MCF 10A (cell line): ENCODE measurements at regions of chr14 and their contacts with region 1.

Region 1: GRCh38 chr14:22099942-22100763 is 426.5 kb upstream of the OR4E1 start:
- DNase-seq: peak; percentile 63
- H3K4me3 Mint-ChIP-seq: no peak overlapping the region
- H3K27ac Mint-ChIP-seq: no peak overlapping the region
- H3K4me1 Mint-ChIP-seq: no peaks in the 10 kb centered on the region
- H3K27me3 Mint-ChIP-seq: peaks cover 75% of the 10 kb centered on the region
- CTCF ChIP-seq: peak; percentile 45

Region 2: GRCh38 chr14:21987937-21988336 is 112.2 kb before region 1 on chr14:
- CTCF ChIA-PET with region 1: interaction called, 11 read pairs
- POLR2A ChIA-PET with region 1: no interaction called
- intact Hi-C with region 1: no loop called
- DNase-seq: peak; percentile 52
- H3K4me3 Mint-ChIP-seq: no peak overlapping the region
- H3K27ac Mint-ChIP-seq: no peak overlapping the region
- H3K4me1 Mint-ChIP-seq: no peaks in the 10 kb centered on the region
- H3K27me3 Mint-ChIP-seq: peaks cover 76% of the 10 kb centered on the region
- CTCF ChIP-seq: peak; percentile 28

Region 3: GRCh38 chr14:22047115-22047514 is 53.0 kb before region 1 on chr14:
- CTCF ChIA-PET with region 1: interaction called, 10 read pairs
- POLR2A ChIA-PET with region 1: no interaction called
- intact Hi-C with region 1: no loop called
- DNase-seq: peak; percentile 41
- H3K4me3 Mint-ChIP-seq: no peak overlapping the region
- H3K27ac Mint-ChIP-seq: no peak overlapping the region
- H3K4me1 Mint-ChIP-seq: no peaks in the 10 kb centered on the region
- H3K27me3 Mint-ChIP-seq: peaks cover 94% of the 10 kb centered on the region
- CTCF ChIP-seq: peak; percentile 33

Region 4: DNA sequence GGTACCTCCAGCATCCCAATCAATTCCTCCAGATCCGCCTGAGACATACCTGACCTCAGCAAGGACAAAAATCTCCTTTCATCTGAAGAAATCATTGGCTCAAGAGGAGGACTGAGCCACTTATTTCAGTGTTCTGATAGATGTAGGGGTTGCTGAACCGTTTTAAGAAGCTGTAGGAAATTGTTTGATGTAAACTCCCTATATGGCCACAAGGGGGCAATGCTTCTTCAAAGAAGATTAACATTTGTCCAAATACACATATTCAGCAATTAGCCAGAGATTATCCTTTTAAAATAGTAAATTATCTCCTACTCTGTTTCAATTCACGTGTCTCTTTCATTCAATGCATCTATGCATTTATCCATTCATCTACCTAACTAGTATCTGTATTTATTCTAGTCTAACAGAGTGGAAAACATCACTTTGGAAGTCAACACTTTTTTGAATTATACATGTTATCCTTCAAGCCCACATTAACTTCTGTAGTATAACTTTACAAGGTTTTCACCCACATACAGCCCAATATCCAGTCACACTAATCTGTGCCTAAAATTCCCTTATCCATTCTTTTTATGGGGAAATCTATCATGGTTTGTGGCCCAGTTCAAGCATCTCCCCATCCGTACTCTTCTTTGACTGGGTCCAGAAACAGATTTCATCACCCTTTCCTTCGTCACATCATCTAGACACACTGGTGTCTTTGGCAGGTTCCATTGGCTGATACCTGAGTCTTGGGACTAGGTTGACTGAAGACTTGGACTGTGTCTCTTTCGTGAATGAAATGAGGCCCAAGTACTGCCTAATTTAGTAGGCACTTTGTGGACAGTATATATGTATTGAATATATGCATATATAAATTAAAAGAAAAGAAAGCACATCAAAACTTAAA is 15.5 kb before region 1 on chr14:
- CTCF ChIA-PET with region 1: interaction called, 11 read pairs
- POLR2A ChIA-PET with region 1: no interaction called
- intact Hi-C with region 1: loop called (anchors 1 kb)
- DNase-seq: peak; percentile 62
- H3K4me3 Mint-ChIP-seq: no peak overlapping the region
- H3K27ac Mint-ChIP-seq: no peak overlapping the region
- H3K4me1 Mint-ChIP-seq: peaks cover 5% of the 10 kb centered on the region
- H3K27me3 Mint-ChIP-seq: peaks cover 38% of the 10 kb centered on the region
- CTCF ChIP-seq: peak; percentile 66

Region 5: GRCh38 chr14:22112004-22112403 is 11.9 kb after region 1 on chr14:
- CTCF ChIA-PET with region 1: interaction called, 27 read pairs
- POLR2A ChIA-PET with region 1: no interaction called
- intact Hi-C with region 1: no loop called
- DNase-seq: peak; percentile 46
- H3K4me3 Mint-ChIP-seq: no peak overlapping the region
- H3K27ac Mint-ChIP-seq: no peak overlapping the region
- H3K4me1 Mint-ChIP-seq: no peaks in the 10 kb centered on the region
- H3K27me3 Mint-ChIP-seq: peaks cover 59% of the 10 kb centered on the region
- CTCF ChIP-seq: peak; percentile 56

Region 6: DNA sequence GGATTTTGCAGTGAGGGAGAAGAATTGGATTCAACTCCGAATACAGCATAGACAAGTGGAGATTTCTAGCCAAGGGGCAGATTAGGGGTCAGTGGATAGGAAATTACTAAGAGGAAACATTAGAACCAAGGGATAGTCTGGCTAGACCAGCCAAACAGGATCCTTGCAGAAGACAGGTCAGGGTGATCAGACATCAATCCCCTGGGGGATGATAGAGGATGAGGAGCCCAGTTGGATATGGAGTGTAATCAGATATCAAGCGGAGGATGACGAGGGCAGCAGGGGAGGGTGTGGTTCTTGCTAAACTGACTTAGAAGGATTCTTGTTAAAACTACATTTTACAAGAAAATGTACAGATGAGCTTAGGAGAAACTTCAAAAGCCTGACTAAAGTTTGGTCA is 64.5 kb after region 1 on chr14:
- CTCF ChIA-PET with region 1: no interaction called
- POLR2A ChIA-PET with region 1: no interaction called
- intact Hi-C with region 1: no loop called
- DNase-seq: no peak
- H3K4me3 Mint-ChIP-seq: no peak overlapping the region
- H3K27ac Mint-ChIP-seq: no peak overlapping the region
- H3K4me1 Mint-ChIP-seq: no peaks in the 10 kb centered on the region
- H3K27me3 Mint-ChIP-seq: peaks cover 24% of the 10 kb centered on the region
- CTCF ChIP-seq: no peak